ENCODE measurements at regions of chr7 and their contacts with region 1.

Region 1: DNA sequence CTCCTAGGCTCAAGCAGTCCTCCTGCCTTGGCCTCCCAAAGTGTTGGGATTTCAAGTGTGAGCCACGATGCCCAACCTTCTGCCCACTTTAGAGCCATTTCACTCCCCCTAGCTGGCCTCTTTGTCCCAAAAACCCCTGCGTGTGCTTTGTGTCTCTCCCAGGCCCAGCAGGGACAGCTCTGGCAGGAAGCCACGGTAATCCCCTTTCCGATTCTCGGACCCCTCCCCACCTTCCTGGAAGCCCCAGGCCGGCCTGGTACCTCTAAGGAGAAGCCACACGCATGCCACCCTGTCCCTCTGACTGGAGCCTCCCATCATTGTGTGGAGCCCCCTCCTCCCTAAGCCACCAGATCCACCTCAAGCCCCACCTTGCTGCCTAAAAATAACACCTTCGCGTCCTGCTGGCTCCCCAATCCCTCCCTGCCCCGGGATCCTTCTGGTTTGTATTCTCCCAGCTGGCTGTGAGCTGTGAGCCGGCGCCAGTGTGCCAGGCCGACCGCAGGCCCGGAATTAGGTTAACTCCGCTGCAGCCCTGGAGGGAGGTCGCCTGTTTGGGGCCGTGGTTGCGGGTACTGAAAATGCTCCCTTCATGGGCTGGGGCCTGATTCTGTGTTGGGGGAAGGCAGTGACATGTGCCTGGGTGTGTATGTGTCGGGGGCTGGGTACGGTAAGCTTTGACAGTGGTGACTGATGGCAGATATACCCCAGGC is 16.4 kb upstream of the SRRM3 start:
- DNase-seq: no peak
- ATAC-seq: no peak
- H3K4me3 ChIP-seq: no peak overlapping the region
- H3K4me1 ChIP-seq: no peaks in the 10 kb centered on the region
- CTCF ChIP-seq: no peak

Region 2: DNA sequence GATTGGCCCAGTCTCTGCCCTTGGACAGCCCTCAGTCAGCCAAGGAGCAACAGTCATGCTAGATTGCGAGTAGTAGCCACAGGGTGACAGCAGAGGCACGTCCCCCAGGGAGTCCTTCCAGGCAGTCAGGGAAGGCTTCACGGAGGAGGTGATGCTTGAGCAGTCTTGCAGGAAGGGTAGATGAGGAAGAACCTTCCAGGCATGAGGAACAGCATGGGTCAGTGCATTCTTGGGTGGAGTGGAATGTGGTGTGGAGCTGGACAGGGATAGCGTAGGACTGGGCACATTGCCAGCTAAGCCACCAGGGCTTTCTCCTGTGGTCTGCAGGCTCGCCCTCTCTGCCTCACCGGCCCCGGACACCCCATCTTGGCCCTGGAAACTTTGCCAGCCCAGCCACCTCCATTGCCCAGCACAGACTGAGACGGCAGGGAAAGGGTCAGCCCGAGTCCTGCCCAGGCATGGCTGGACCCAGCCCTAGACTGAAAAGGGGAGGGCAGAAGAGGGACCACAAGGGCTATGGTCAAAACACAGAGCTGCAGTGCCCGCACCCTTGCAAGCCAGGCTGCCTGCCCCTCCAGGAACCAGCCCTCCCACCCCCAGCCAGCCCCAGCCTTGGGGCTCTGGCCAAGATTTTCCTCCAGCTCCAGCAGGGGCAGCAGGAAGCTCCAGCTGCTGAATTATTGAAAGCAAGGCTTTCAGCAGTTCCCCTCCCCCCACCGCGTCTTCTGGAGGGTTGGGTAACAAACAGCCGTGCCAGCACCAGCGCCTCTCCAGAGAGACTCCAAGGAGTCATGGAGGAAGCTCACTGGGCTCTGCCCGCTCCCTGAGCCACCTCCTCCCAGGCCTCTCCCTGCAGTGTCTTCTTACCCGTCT is 35.1 kb after region 1 on chr7:
- intact Hi-C with region 1: no loop called
- DNase-seq: no peak
- ATAC-seq: no peak
- H3K4me3 ChIP-seq: no peak overlapping the region
- H3K4me1 ChIP-seq: no peaks in the 10 kb centered on the region
- CTCF ChIP-seq: no peak

Region 3: DNA sequence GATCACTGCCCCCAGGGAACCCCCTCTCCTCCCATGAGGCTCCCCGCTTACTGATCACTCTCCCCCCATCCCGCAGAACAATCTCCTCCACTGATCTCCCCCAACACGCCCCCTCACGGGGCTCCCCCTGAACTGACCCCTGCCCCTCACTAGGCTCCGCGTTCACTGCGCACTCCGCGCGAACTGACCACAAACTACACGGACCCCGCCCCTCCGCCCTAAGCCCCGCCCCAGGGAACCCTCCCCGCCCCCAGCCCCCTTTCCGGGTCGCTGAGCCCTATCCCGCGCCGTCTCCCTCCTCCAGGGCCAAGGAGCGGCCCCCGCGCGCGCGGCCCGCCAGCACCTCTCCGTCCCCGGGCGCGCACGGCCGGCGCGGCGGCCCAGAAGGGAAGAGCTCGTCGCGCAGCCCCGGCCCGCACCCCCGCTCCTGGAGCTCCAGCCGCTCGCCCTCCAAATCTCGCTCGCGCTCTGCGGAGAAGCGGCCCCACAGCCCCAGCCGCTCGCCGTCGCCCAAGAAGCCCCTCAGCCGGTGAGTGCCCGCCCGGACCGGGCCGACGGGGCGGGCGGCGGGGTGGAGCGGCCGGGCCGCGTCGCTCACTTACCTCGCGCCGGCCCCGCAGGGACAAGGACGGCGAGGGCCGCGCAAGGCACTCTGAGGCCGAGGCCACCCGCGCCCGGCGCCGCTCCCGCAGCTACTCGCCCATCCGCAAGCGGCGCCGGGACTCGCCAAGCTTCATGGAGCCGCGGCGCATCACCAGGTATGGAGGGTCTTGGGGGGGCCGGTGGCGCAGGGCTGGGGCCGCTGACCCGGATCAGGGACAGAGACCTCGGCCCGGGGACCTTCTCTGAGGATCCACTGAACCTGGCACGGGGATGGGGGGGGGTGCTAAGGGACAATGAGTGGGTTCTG is 97.3 kb after region 1 on chr7:
- intact Hi-C with region 1: loop called in 1 of 2 experiments (anchors 10 kb)
- DNase-seq: no peak
- ATAC-seq: peak; percentile 40
- H3K4me3 ChIP-seq: no peak overlapping the region
- H3K4me1 ChIP-seq: peaks cover 9% of the 10 kb centered on the region
- CTCF ChIP-seq: no peak

Measured in mucosa of descending colon (tissue), 3 donors.